Dorsolateral prefrontal cortex (tissue), 120 donors: ENCODE measurements at regions of chr1 and their contacts with region 1.

Region 1: DNA sequence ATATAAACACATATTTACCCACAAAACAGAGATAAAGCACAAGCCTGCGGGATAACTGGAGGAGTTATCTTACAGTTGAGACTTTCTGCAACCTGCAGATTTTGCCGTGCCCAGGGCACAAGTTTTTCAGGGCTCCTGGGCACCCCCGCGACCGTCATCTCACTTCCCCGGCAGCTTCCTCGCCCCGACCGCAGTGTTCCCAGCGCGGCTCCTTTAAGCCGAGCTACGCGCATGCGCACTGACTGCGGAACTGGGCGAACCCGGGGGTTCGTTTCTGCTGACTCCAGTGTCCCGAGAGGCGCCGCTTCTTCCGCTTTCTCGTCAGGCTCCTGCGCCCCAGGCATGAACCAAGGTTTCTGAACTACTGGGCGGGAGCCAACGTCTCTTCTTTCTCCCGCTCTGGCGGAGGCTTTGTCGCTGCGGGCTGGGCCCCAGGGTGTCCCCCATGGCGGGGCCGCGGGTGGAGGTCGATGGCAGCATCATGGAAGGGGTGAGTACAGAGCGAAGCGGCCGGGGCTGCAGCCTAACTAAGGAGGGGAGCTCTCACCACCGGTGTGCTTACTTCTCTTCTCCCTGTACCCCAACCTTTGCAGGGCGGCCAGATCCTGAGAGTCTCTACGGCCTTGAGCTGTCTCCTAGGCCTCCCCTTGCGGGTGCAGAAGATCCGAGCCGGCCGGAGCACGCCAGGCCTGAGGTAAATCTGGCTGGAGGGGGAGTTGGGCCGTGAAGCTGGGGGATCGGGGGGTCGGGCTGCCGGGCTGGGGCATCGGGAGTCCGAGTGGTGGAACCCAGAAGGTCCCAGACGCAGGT is at the start of gene RTCA:
- DNase-seq: peak; percentile 92 to 96 (median 95)
- H3K4me3 ChIP-seq: peak within 1 kb of the TSS; percentile 44 to 100 (median 94)
- H3K27ac ChIP-seq: peak within 1 kb of the TSS in 58 of 59 donors; percentile 6 to 94 (median 80)
- H3K27me3 ChIP-seq: no peaks in the 10 kb centered on the region
- CTCF ChIP-seq: peak in 32 of 56 donors; percentile 8 to 59 (median 34)
- total RNA-seq, gene RTCA: 16.4 to 47.7 (median 35.9) TPM

Region 2: GRCh38 chr1:100229681-100230443 is 36.3 kb before region 1 on chr1:
- intact Hi-C with region 1: no loop called
- DNase-seq: no peak
- H3K4me3 ChIP-seq: no peak overlapping the region
- H3K27ac ChIP-seq: no peak overlapping the region
- H3K27me3 ChIP-seq: no peaks in the 10 kb centered on the region
- CTCF ChIP-seq: no peak

Region 3: GRCh38 chr1:100249537-100250257 is 16.4 kb before region 1 on chr1 and contains the start of gene DBT:
- intact Hi-C with region 1: loop called in 1 of 2 experiments (anchors 2 kb)
- DNase-seq: peak; percentile 86 to 98 (median 97)
- H3K4me3 ChIP-seq: peak within 1 kb of the TSS; percentile 52 to 100 (median 90)
- H3K27ac ChIP-seq: peak within 1 kb of the TSS; percentile 35 to 95 (median 87)
- H3K27me3 ChIP-seq: no peaks in the 10 kb centered on the region
- CTCF ChIP-seq: peak in 30 of 56 donors; percentile 6 to 56 (median 26)
- total RNA-seq, gene DBT: 13.7 to 27.3 (median 20.7) TPM

Region 4: DNA sequence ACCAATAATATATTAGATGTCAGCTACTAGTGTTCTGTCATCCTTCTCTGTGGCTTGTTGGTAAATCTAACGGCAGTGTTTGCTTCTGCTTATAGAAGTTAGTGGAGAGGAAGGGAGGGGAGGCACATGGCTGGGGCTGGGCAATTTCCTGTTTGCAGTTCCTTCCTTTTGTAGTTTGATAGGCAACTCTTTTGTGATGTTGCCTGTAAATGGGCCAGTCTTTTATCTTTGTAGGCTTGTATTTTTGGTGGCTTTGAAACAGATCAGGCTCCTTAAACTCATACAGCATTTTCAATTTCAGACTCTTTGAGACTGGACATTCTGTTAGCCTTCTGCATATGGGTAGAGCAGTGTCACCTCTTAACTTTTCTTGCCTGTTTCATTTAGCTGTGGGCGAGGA is 134.3 kb after region 1 on chr1:
- intact Hi-C with region 1: no loop called
- DNase-seq: peak in 3 of 10 donors; percentile 31 to 42 (median 36)
- H3K4me3 ChIP-seq: peak overlapping the region in 2 of 59 donors; percentile 3 to 4
- H3K27ac ChIP-seq: peak overlapping the region in 3 of 59 donors; percentile 17 to 26 (median 20)
- H3K27me3 ChIP-seq: no peaks in the 10 kb centered on the region
- CTCF ChIP-seq: no peak

Region 5: GRCh38 chr1:100895540-100896483 is 629.7 kb after region 1 on chr1 and contains the start of gene SLC30A7:
- intact Hi-C with region 1: loop called in 1 of 2 experiments (anchors 10 kb)
- DNase-seq: peak; percentile 89 to 96 (median 93)
- H3K4me3 ChIP-seq: peak within 1 kb of the TSS; percentile 68 to 98 (median 88)
- H3K27ac ChIP-seq: peak within 1 kb of the TSS; percentile 74 to 97 (median 92)
- H3K27me3 ChIP-seq: no peaks in the 10 kb centered on the region
- CTCF ChIP-seq: peak in 7 of 56 donors; percentile 9 to 37 (median 21)
- total RNA-seq, gene SLC30A7: 14.8 to 30.3 (median 21.4) TPM